Mammary epithelial cell (primary cell): ENCODE measurements at regions of chr3 and their contacts with region 1.

Region 1: DNA sequence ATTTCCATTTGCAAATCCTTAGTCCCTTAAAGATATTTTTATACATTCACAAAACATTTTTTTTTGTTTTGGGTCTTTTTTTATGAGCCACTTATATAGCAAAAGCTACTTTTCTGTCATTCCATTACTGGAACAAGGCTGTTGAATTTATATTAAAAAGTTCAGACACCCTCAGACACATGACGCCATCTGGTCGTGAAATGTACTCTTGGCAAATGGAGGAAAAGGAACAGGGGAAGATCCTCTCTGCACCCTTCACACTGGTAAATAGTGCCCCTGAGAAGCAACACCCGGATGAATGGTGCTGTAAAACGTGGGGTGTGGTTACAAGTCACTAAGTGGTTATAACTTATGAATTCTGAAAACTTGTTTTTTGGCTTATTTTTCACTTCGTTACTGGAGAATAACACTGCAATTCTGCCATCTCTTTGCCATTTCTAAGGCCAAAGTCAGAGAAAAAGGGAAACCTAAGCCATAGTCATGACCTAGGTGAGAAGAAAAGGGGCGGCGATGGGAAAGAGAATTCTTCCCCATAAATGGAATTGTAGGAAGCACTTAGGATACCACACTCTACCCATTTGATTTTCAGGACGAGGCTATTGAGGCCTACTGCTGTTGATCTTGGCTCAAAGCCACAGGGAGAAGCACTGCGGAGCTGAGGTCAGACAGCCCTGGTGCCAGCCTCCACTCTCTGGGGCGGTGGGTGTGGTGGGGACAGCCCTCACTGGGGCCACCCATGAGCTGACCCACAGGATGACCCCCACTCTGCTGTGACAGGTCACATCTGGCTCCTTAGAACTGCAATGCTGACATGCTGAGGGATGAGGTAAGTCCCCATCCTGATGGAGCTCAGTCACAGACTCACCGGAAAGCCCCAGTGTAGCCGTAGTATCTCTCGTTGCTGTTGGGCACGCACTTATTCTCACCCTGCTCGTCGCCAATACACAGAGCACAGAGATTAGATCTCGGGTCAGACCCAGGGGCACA is 21.8 kb downstream of the LTF start:
- DNase-seq: no peak
- H3K4me3 ChIP-seq: no peak overlapping the region
- H3K27ac ChIP-seq: no peak overlapping the region
- H3K4me1 ChIP-seq: no peaks in the 10 kb centered on the region
- H3K27me3 ChIP-seq: no peaks in the 10 kb centered on the region
- CTCF ChIP-seq: no peak

Region 2: DNA sequence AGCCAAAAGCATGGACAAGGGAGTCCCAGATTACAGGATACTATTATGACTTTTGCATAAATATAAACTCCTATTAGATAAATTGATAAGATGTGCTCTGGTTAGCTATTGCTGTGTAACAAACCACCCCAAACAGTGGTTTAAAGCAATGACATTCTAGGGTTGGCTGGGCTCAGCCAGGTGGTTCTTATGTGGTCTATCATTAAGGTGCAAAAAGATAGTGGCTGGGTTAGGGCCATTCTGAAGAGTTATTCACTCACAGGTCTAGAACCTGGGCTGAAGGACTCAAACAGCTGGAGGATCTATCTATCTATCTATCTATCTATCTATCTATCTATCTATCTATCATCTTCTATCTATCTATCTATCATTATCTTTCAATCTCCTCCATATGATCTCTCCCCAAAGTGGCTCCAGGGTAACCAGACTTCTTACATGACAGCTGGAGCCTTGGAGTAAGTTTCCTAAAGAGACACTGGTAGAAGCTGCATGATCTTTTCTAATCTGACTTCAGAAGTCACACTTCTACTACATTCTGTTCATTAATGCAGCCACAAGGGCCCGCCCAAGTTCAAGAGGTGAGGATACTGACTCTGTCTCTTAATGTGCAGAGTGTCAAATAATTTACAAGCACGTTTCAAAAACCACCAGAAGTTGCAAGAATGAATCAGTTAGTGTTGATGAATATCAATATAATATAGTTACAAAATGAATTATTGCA is 340.6 kb before region 1 on chr3:
- CTCF ChIA-PET with region 1: no interaction called
- dilution Hi-C with region 1: no loop called
- in situ Hi-C with region 1: no loop called
- intact Hi-C with region 1: loop called (anchors 1 kb)
- DNase-seq: peak; percentile 29
- H3K4me3 ChIP-seq: no peak overlapping the region
- H3K27ac ChIP-seq: no peak overlapping the region
- H3K4me1 ChIP-seq: peaks cover 16% of the 10 kb centered on the region
- H3K27me3 ChIP-seq: no peaks in the 10 kb centered on the region
- CTCF ChIP-seq: peak; percentile 16 to 37

Region 3: GRCh38 chr3:46228259-46229242 is 214.3 kb before region 1 on chr3:
- CTCF ChIA-PET with region 1: no interaction called
- dilution Hi-C with region 1: no loop called
- in situ Hi-C with region 1: no loop called
- intact Hi-C with region 1: loop called (anchors 5 kb)
- DNase-seq: peak; percentile 82
- H3K4me3 ChIP-seq: no peak overlapping the region
- H3K27ac ChIP-seq: no peak overlapping the region
- H3K4me1 ChIP-seq: peaks cover 5% of the 10 kb centered on the region
- H3K27me3 ChIP-seq: peaks cover 5% of the 10 kb centered on the region
- CTCF ChIP-seq: no peak

Region 4: DNA sequence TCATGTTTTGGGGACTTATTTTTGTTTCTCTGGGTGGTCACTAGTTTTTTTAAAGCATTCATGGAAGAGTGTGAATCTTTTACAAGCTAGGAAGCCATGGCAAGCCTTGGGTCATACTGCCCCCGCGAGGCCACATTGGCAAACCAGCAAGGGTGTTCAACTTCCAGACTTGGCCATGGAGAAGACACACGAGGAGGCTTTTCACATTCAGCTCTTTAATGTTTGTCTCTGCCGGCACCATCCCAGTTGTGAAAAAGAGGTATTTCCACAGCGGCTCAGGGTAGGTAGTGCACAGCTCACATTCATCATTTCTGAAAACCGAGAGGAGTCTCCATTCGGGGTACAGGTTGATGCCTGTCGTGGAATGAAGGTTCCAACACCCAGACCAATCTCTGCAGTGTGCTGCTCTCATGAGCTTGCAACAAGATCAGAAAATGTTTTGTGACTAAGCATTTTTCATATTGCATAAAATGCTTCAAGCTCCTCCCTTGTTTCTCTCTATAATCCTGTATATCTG is 64.4 kb before region 1 on chr3:
- CTCF ChIA-PET with region 1: no interaction called
- dilution Hi-C with region 1: no loop called
- in situ Hi-C with region 1: no loop called
- intact Hi-C with region 1: loop called (anchors 1 kb)
- DNase-seq: peak; percentile 61
- H3K4me3 ChIP-seq: no peak overlapping the region
- H3K27ac ChIP-seq: no peak overlapping the region
- H3K4me1 ChIP-seq: peaks cover 16% of the 10 kb centered on the region
- H3K27me3 ChIP-seq: no peaks in the 10 kb centered on the region
- CTCF ChIP-seq: peak; percentile 76 to 81

Region 5: GRCh38 chr3:46488735-46489361 is 46.0 kb after region 1 on chr3:
- CTCF ChIA-PET with region 1: no interaction called
- dilution Hi-C with region 1: loop called (anchors 5 kb)
- in situ Hi-C with region 1: no loop called
- intact Hi-C with region 1: no loop called
- DNase-seq: peak; percentile 82
- H3K4me3 ChIP-seq: no peak overlapping the region
- H3K27ac ChIP-seq: no peak overlapping the region
- H3K4me1 ChIP-seq: peaks cover 21% of the 10 kb centered on the region
- H3K27me3 ChIP-seq: no peaks in the 10 kb centered on the region
- CTCF ChIP-seq: peak; percentile 100